Left cardiac atrium (tissue), 4 donors: ENCODE measurements at regions of chr17 and their contacts with region 1.

Region 1: GRCh38 chr17:20121359-20122253 is 112.4 kb downstream of the SPECC1 start:
- DNase-seq: peak; percentile 73
- ATAC-seq: peak; percentile 63 to 78

Region 2: GRCh38 chr17:19986941-19987861 is 134.4 kb before region 1 on chr17:
- intact Hi-C with region 1: loop called (anchors 2 to 5 kb)
- DNase-seq: no peak
- ATAC-seq: no peak

Region 3: GRCh38 chr17:19992803-19993713 is 128.5 kb before region 1 on chr17:
- intact Hi-C with region 1: loop called (anchors 2 to 5 kb)
- DNase-seq: peak; percentile 89
- ATAC-seq: peak; percentile 98

Region 4: GRCh38 chr17:20009302-20010098 is 112.1 kb before region 1 on chr17 and contains the start of gene SPECC1:
- intact Hi-C with region 1: loop called (anchors 5 kb)
- DNase-seq: peak; percentile 82
- ATAC-seq: peak; percentile 97 to 99
- total RNA-seq, gene SPECC1: 12.6 to 14.2 TPM

Region 5: DNA sequence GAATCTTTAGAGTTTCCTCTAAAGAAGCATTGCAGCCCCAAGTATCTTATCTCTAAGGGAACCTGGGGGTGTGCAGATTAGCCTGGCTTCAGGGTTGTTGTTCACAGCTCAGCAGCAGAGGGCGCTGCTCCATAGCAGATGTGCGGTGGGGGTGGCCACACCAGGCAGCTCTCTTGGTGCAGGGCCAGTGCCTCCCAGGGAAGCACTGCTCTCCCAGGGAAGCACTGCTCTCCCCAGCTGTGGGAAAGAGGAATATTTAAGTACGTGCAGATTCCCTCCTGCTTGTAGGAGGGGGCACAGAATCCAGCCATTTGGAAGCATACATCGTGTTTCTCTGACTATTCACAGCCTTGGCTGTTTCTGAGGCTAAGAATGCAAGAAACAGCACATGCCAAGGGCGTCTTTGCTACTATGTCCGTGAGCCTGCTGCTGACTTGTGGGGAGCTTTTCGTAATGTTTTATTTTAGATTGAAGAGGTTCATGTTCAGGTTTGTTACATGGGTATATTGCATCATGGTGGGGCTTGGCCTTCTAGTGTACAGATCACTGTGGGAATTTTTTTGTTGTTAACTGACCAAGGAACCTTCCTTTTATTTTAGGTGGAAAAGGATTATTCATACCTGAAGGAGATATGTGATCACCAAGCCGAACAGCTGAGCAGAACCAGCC is 105.3 kb after region 1 on chr17:
- intact Hi-C with region 1: loop called in 1 of 2 experiments (anchors 5 kb)
- DNase-seq: peak; percentile 87
- ATAC-seq: peak; percentile 97 to 98

Region 6: GRCh38 chr17:20315821-20316220 is 194.2 kb after region 1 on chr17:
- intact Hi-C with region 1: loop called (anchors 5 kb)
- DNase-seq: no peak
- ATAC-seq: no peak